ENCODE measurements at regions of chr5 and their contacts with region 1.

Region 1: DNA sequence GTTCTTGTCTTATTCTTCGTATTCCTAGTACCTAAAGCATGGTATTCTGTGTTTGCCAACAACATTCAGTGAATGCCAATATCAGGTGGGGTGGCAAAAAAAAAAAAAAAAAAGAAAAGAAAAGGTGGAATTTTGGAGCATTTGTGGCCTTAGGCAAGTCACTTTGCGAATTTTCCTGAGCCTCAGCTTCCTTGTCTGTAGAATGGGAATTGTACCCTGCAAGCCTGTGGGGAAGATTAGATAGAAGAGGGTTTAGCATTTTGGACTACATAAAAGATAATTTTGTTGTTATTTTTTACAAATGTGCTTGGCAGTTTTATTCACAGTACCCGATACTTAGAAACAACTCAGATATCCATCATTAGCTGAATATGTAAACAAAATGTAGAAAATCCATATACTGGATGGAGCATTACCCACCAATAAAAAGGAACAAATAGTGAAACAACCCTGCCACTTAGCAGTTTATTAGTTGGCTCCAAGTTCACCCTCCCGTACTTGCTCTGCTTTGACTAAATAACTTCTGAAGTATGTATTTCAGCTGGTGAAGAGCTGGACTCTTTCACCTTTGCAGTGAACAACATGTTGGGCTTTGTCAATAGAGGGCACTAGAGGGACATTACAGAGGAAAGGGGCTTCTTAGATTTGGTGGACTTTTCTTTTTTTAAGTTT is 13.6 kb downstream of the UBE2D2 start:
- DNase-seq: peak; percentile 67

Region 2: DNA sequence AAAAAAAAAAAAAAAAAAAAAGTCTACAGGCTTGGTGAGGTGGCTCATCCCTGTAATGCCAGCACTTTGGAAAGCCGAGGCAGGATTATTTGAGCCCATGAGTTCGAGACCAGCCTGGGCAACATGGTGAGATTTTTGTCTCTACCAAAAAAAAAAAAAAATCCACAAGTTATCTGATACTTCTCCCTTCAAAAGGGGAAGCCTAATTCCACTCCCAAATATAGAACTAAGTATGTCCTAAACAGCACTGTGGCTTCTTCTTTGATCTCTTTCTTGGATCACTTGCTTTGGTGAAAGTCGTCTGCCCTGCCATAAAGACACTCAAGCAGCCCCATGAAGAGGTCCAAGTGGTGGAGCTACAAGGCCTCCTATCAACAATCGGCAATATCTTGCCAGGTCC is 73.4 kb before region 1 on chr5:
- in situ Hi-C with region 1: no loop called
- DNase-seq: no peak

Region 3: GRCh38 chr5:139630855-139631254 is 56.1 kb after region 1 on chr5:
- in situ Hi-C with region 1: no loop called
- DNase-seq: no peak

Region 4: DNA sequence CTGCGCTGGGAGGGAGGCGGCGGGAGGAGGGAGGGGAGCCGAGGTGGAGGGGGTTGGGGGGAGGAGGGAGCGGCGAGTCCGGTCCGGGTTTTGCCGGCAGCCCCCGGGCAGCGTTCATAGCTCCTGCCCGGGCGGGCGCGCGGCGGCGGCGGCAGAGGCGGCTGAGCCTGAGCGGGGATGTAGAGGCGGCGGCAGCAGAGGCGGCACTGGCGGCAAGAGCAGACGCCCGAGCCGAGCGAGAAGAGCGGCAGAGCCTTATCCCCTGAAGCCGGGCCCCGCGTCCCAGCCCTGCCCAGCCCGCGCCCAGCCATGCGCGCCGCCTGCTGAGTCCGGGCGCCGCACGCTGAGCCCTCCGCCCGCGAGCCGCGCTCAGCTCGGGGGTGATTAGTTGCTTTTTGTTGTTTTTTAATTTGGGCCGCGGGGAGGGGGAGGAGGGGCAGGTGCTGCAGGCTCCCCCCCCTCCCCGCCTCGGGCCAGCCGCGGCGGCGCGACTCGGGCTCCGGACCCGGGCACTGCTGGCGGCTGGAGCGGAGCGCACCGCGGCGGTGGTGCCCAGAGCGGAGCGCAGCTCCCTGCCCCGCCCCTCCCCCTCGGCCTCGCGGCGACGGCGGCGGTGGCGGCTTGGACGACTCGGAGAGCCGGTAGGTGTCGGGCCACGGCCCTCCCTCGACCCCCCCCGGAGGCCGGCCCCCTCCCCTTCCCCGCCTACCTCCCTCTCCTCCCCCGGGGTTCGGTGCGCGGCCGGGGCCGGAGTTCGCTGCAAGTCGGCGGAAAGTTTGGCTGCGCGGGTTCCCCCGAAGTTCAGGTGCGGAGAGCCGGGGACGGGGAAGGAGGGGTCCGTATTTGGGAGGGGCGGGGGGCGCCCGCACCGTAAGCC is 73.7 kb after region 1 on chr5 and contains the start of gene CXXC5:
- in situ Hi-C with region 1: loop called (anchors 10 kb)
- DNase-seq: peak; percentile 89
- total RNA-seq, gene CXXC5: 280 and 322 TPM in 2 replicates

Measured in G401 (cell line).